Calu3 (cell line): ENCODE measurements at regions of chr10 and their contacts with region 1.

Region 1: GRCh38 chr10:44939691-44940401 is 19.8 kb upstream of the RASSF4 start:
- DNase-seq: no peak
- H3K4me3 Mint-ChIP-seq: no peak overlapping the region
- H3K27ac Mint-ChIP-seq: no peak overlapping the region
- H3K4me1 Mint-ChIP-seq: peaks cover 17% of the 10 kb centered on the region
- H3K27me3 Mint-ChIP-seq: no peaks in the 10 kb centered on the region
- CTCF ChIP-seq: no peak

Region 2: DNA sequence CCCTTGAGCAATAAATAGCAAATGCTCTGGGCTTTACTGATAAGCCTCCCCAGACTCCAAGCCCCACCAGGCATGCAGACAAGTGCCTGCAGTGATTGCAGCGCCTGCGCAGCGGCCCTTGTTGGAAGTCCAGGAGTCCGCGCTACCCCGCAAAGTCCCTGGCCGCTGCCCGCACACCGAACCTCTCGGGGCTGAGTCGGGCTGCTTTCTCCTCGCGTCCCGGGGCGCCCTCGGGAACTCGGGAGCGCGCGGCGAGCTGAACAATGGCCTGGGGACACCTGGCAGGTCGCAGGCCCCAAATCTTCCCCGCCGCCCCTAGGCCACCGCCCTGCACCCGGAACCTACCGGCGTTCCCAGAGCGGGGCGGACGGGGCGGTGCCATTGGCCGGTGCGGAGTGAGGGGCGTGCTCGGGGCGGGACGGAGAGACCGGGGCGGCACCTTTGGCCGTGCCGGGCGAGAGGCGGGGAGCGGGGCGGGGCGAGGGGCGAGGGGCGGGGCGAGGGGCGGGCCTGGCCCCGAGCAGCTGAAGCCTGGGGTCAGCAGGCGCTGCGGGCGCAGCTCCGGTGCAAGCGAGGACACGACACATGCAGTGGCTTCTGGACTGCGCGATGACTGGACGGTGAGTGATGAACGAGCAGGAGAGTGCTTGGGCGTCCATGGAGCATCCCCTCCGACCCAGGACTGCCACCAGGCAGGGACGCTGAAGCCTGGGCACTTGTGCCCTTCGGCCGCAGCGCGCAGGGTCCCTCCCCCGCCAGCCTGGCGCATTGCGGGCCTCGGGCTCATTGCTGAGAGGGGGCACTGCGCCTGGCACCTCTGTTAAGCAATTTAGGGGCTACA is 19.6 kb after region 1 on chr10 and contains the start of gene RASSF4:
- CTCF ChIA-PET with region 1: no interaction called
- intact Hi-C with region 1: no loop called
- DNase-seq: peak; percentile 95
- H3K4me3 Mint-ChIP-seq: peak within 1 kb of the TSS; percentile 76
- H3K27ac Mint-ChIP-seq: peak within 1 kb of the TSS; percentile 33
- H3K4me1 Mint-ChIP-seq: peaks cover 14% of the 10 kb centered on the region
- H3K27me3 Mint-ChIP-seq: no peaks in the 10 kb centered on the region
- CTCF ChIP-seq: no peak
- total RNA-seq, gene RASSF4: 2.2 and 2.4 TPM in 2 replicates

Region 3: GRCh38 chr10:44974628-44975431 is 35.0 kb after region 1 on chr10:
- CTCF ChIA-PET with region 1: interaction called, 7 read pairs
- intact Hi-C with region 1: loop called (anchors 2 kb)
- DNase-seq: peak; percentile 80
- H3K4me3 Mint-ChIP-seq: peak overlapping the region; percentile 52
- H3K27ac Mint-ChIP-seq: no peak overlapping the region
- H3K4me1 Mint-ChIP-seq: peaks cover 28% of the 10 kb centered on the region
- H3K27me3 Mint-ChIP-seq: no peaks in the 10 kb centered on the region
- CTCF ChIP-seq: peak; percentile 94